Activated naive CD4-positive, alpha-beta T cell treated with anti-CD3 and anti-CD28 coated beads for 36 hours (primary cell): ENCODE measurements at regions of chr6 and their contacts with region 1.

Region 1: DNA sequence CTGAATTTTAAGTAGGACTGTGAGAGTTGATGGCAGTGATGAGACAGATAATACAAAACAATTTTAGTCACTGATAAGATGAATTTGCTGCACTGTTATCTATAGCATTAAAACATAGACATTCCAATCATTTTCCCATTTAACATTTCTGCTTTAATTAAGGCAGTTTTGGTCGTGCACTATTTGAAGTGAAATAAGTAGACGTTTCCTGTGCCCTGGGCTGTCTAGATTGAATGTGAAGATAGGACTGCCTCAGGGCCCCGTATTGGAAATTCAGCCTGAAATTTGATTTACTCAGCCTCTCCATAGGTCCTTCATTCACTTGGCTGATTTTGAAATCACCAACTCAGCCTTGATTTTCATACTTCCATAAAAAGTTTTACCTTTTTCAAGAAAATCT is 48.3 kb downstream of the ARID1B start:
- DNase-seq: no peak
- H3K4me3 Mint-ChIP-seq: no peak overlapping the region
- H3K27ac Mint-ChIP-seq: no peak overlapping the region
- H3K4me1 Mint-ChIP-seq: peaks cover 75% of the 10 kb centered on the region
- H3K27me3 Mint-ChIP-seq: no peaks in the 10 kb centered on the region

Region 2: DNA sequence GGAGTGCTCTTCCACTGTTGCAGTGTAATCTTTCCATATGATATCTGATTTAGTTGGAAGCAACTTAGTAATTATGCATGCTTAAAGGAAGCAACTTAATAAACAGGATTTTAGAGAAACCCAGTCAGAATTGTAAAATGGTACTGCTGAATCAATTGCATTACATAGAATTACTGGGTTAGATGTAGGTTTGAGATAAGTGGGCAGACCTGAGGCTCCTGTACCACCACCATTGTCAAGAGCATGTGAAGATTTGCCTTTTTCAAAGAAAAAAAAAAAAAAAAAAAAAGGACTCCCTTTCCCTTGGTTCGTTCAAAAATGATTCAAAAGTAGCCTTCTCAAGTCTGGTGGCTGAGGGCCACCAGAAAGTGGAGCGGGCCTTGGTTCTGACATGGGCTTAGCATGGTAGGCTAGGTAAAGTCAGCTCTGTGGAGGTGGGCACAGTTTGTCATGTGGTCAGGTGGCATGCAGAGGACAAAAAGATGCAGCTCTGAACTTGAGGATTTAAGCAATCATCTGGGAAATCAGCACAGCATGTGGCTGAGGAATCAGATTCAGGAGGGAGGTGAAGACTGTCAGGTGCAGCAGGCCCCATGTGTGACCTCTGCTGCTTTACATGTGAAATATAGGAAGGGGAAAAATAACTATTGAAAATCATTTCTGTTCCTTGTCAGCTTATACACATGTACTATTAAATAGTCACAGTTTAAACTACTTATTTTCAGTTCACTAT is 15.9 kb before region 1 on chr6:
- CTCF ChIA-PET with region 1: no interaction called
- intact Hi-C with region 1: loop called (anchors 2 kb)
- DNase-seq: no peak
- H3K4me3 Mint-ChIP-seq: no peak overlapping the region
- H3K27ac Mint-ChIP-seq: no peak overlapping the region
- H3K4me1 Mint-ChIP-seq: peaks cover 79% of the 10 kb centered on the region
- H3K27me3 Mint-ChIP-seq: no peaks in the 10 kb centered on the region